HepG2 (cell line): ENCODE measurements at regions of chr11 and their contacts with region 1.

Region 1: DNA sequence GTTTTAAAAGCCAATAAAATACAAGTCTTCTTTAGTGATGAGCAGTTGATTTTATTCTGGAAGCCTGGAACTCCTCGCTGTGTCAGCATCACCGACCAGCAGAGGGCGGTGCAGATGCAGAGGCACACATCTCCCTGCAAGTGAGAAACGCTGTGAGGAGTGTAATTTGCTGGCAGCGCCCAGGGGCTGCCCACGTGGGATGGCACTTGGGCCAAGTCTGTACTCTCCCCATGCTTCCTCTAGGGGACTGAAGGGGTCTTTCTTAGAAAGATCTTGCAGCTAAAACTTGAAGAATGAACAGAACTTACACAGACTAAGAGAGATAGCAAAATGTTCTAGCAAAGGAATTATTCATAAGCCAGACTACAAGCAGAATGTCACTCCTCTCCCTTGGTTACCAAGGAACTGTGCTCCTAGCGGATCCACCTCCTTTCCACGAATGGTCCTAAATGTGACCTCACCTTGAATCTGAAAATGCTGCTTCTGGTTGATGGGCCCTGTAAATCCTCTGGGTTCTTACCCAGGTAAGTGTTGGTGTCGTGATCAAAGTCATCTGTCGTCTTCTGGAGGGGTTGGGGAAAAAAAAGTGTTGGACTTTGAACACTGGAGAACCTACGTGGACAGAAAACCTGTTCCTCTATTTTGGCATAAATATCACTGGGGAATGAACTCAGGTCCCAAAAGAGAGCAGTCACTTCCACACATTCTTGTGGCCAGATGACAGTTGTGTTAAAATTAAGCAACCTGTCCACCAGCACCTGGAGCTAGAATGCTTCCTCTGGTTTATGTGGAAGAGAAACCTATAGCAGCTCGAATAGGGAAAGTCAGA is 31.8 kb downstream of the CNTF start:
- DNase-seq: peak; percentile 59
- ATAC-seq: peak; percentile 99
- H3K4me3 ChIP-seq: no peak overlapping the region
- H3K27ac ChIP-seq: no peak overlapping the region
- H3K4me1 ChIP-seq: peaks cover 9% of the 10 kb centered on the region; the same call in 1 of the 2 replicates
- H3K27me3 ChIP-seq: no peaks in the 10 kb centered on the region
- CTCF ChIP-seq: peak; percentile 90
- EP300 ChIP-seq: no peak
- POLR2A ChIP-seq: no peak
- RAD21 ChIP-seq: peak; percentile 66

Region 2: GRCh38 chr11:58640386-58641023 is 13.8 kb before region 1 on chr11:
- CTCF ChIA-PET with region 1: no interaction called
- POLR2A ChIA-PET with region 1: no interaction called
- in situ Hi-C with region 1: no loop called
- intact Hi-C with region 1: no loop called
- DNase-seq: no peak
- ATAC-seq: no peak
- H3K4me3 ChIP-seq: no peak overlapping the region
- H3K27ac ChIP-seq: no peak overlapping the region
- H3K4me1 ChIP-seq: no peaks in the 10 kb centered on the region
- H3K27me3 ChIP-seq: no peaks in the 10 kb centered on the region
- CTCF ChIP-seq: no peak
- EP300 ChIP-seq: no peak
- POLR2A ChIP-seq: no peak
- RAD21 ChIP-seq: no peak

Region 3: DNA sequence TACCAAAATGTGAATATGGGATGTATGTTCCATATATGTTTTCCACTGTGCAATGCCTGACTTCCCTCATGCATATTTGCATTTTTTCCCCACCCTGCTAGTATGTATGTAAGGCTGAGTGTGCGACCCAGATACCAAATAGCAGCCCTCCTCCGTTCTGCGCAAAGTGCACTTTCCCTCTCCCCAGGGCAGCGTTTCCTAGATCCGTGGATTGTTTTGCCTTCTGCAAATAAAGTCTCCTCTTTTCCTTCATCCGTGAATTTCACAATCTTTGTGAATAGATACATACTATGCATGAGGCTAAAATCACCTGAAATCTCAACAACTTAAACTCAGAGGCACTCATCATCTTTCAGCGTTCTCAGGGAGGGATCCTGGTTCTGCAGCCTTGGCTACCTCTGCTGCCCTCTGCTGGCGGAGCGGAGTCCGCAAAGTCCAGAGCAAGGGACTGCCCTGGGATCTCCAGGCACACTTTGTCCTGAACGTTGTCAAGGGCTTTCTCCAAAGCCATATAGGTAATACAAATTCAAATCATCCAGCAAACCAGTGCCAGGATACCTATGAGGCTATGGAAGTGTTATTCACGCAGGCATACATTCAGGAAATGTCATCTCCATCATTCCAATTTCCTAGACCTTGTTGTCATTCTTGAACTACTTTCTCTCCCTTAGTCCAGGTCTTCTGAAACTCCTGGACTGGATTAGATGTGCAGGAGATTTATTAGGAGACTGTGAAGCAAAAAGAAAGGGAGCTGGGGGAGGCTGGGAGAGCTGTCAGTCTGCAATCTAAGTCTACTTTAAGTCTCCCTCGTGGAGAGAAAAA is 21.3 kb after region 1 on chr11:
- CTCF ChIA-PET with region 1: interaction called, 8 read pairs
- POLR2A ChIA-PET with region 1: no interaction called
- in situ Hi-C with region 1: no loop called
- intact Hi-C with region 1: loop called (anchors 1 kb)
- DNase-seq: peak; percentile 32
- ATAC-seq: peak; percentile 99
- H3K4me3 ChIP-seq: no peak overlapping the region
- H3K27ac ChIP-seq: no peak overlapping the region
- H3K4me1 ChIP-seq: no peaks in the 10 kb centered on the region
- H3K27me3 ChIP-seq: no peaks in the 10 kb centered on the region
- CTCF ChIP-seq: peak; percentile 90
- EP300 ChIP-seq: no peak
- POLR2A ChIP-seq: no peak
- RAD21 ChIP-seq: peak; percentile 45; the same call in 1 of the 2 replicates

Region 4: GRCh38 chr11:58788355-58789023 is 134.2 kb after region 1 on chr11:
- CTCF ChIA-PET with region 1: interaction called, 39 read pairs
- POLR2A ChIA-PET with region 1: no interaction called
- in situ Hi-C with region 1: loop called (anchors 5 kb)
- intact Hi-C with region 1: loop called (anchors 1 kb)
- DNase-seq: peak; percentile 67
- ATAC-seq: peak; percentile 98
- H3K4me3 ChIP-seq: no peak overlapping the region
- H3K27ac ChIP-seq: no peak overlapping the region
- H3K4me1 ChIP-seq: peaks cover 7% of the 10 kb centered on the region
- H3K27me3 ChIP-seq: no peaks in the 10 kb centered on the region
- CTCF ChIP-seq: peak; percentile 92
- EP300 ChIP-seq: no peak
- POLR2A ChIP-seq: no peak
- RAD21 ChIP-seq: peak; percentile 85

Region 5: GRCh38 chr11:58900479-58901420 is 246.5 kb after region 1 on chr11:
- CTCF ChIA-PET with region 1: interaction called, 10 read pairs
- POLR2A ChIA-PET with region 1: no interaction called
- in situ Hi-C with region 1: loop called (anchors 10 kb)
- intact Hi-C with region 1: loop called (anchors 2 kb)
- DNase-seq: peak; percentile 56
- ATAC-seq: peak; percentile 96
- H3K4me3 ChIP-seq: 0 out of 6 replicates have a peak overlapping the region, but pooled peaks of 1 of the 3 experiments have one; percentile 39
- H3K27ac ChIP-seq: no peak overlapping the region
- H3K4me1 ChIP-seq: 0 out of 2 replicates have a peak, but pooled peaks cover 4% of the 10 kb centered on the region
- H3K27me3 ChIP-seq: peaks cover 1 to 3% of the 10 kb centered on the region in 2 experiments; a peak in 2 of 5 replicates
- CTCF ChIP-seq: peak; percentile 89
- EP300 ChIP-seq: no peak
- POLR2A ChIP-seq: no peak
- RAD21 ChIP-seq: peak; percentile 63; the same call in 1 of the 2 replicates

Region 6: DNA sequence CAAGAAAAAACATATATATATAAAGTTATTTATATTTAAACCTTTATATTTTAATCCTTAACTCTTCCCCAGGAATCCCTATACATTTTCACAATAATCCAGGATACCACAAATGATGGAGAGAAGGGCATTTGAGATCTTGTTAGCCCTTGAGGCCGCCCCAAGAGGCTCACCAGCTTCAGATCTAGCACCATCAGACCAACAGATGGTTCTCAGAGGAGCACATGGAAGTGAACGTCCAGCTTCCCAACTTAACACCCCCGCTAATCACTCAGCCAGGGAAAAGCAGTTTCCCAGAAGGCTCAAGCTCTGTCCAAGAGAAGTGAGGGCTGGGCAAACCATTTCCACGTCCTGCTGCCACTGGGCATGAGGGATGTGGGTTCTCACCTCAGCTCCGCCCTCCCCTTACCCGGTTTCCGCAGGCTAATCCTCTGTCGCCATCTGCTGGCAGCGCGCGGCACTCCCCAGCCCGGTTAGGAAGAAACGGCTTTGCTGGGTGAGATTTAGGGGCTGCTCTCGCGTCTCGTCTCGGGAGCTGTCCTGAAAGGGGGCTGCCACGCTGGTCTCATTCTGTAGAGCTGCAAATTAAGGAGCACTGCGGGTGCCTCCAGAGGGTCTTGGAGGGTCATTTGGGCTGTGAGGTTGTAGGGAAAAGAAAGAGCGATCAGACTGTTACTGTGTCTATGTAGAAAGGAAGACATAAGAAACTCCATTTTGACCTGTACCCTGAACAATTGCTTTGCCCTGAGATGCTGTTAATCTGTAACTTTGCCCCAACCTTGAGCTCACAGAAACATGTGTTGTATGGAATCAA is 481.6 kb after region 1 on chr11:
- CTCF ChIA-PET with region 1: no interaction called
- POLR2A ChIA-PET with region 1: no interaction called
- in situ Hi-C with region 1: no loop called
- intact Hi-C with region 1: loop called (anchors 10 kb)
- DNase-seq: peak; percentile 70
- ATAC-seq: peak; percentile 100
- H3K4me3 ChIP-seq: peak overlapping the region in 2 of 3 experiments; percentile 36 to 60; a peak in 2 of 6 replicates
- H3K27ac ChIP-seq: peak overlapping the region; percentile 57
- H3K4me1 ChIP-seq: peaks cover 12% of the 10 kb centered on the region
- H3K27me3 ChIP-seq: no peaks in the 10 kb centered on the region
- CTCF ChIP-seq: peak; percentile 99
- EP300 ChIP-seq: no peak
- POLR2A ChIP-seq: no peak
- RAD21 ChIP-seq: peak; percentile 93

Region 7: GRCh38 chr11:59641156-59641555 is 986.9 kb after region 1 on chr11:
- CTCF ChIA-PET with region 1: no interaction called
- POLR2A ChIA-PET with region 1: no interaction called
- in situ Hi-C with region 1: no loop called
- intact Hi-C with region 1: no loop called
- DNase-seq: no peak
- ATAC-seq: no peak
- H3K4me3 ChIP-seq: no peak overlapping the region
- H3K27ac ChIP-seq: no peak overlapping the region
- H3K4me1 ChIP-seq: peaks cover 18% of the 10 kb centered on the region
- H3K27me3 ChIP-seq: no peaks in the 10 kb centered on the region
- CTCF ChIP-seq: no peak
- EP300 ChIP-seq: no peak
- POLR2A ChIP-seq: no peak
- RAD21 ChIP-seq: no peak